Stomach (tissue), 19 donors: ENCODE measurements at regions of chr14 and their contacts with region 1.

Region 1: GRCh38 chr14:23320774-23321571 is at the start of gene PABPN1:
- DNase-seq: peak; percentile 100
- H3K4me3 ChIP-seq: peak within 1 kb of the TSS; percentile 90 to 96 (median 92)
- H3K27ac ChIP-seq: peak within 1 kb of the TSS; percentile 96 to 100 (median 98)
- H3K4me1 ChIP-seq: peaks cover 19 to 36% (median 29%) of the 10 kb centered on the region in 4 donors
- H3K27me3 ChIP-seq: no peaks in the 10 kb centered on the region
- CTCF ChIP-seq: no peak
- EP300 ChIP-seq: no peak
- POLR2A ChIP-seq: no peak
- total RNA-seq, gene PABPN1: 24.5 to 152 (median 70.5) TPM

Region 2: DNA sequence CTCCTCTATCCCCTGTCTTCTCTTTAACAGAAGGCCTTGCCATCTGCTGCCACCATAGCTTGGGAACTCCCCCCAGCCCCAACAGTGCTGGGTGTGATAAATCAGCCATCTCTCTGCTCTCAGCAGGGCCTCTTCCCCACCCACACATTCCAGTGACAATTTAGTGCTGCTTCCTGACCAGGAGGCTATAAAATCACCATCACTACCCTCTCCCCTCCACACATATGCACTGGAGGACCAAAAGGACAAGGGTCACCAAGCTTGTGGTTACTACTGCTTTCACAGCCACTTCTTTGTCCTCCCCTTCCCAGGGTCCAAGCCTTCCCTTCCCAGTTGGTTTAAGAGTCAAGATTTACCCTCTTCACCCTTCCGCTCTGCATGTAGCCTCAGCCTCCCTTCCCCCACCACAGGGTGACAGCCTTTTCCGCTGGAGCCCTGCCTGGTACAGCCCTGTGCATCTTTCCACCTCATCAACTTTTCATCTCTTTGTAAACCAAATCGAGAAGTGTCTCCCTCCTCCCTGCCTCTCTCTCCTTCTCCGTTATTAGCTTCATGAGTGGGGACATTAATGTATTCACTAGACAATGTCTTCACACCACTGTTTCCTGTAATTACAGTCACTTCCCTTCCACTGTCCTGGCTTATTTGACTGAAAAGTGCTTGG is 295.7 kb before region 1 on chr14:
- intact Hi-C with region 1: no loop called
- DNase-seq: no peak
- H3K4me3 ChIP-seq: no peak overlapping the region
- H3K27ac ChIP-seq: no peak overlapping the region
- H3K4me1 ChIP-seq: peaks cover 0 to 19% (median 8%) of the 10 kb centered on the region in 4 donors
- H3K27me3 ChIP-seq: no peaks in the 10 kb centered on the region
- CTCF ChIP-seq: no peak
- EP300 ChIP-seq: no peak
- POLR2A ChIP-seq: no peak

Region 3: GRCh38 chr14:23399591-23399990 is 78.6 kb after region 1 on chr14:
- intact Hi-C with region 1: no loop called
- DNase-seq: no peak
- H3K4me3 ChIP-seq: no peak overlapping the region
- H3K27ac ChIP-seq: no peak overlapping the region
- H3K4me1 ChIP-seq: no peaks in the 10 kb centered on the region
- H3K27me3 ChIP-seq: peaks cover 0 to 32% (median 7%) of the 10 kb centered on the region in 3 donors
- CTCF ChIP-seq: no peak
- EP300 ChIP-seq: no peak
- POLR2A ChIP-seq: no peak

Region 4: GRCh38 chr14:23469127-23469905 is 148.3 kb after region 1 on chr14 and contains the start of gene NGDN:
- intact Hi-C with region 1: loop called (anchors 10 kb)
- DNase-seq: peak; percentile 94 to 99
- H3K4me3 ChIP-seq: peak within 1 kb of the TSS; percentile 72 to 100 (median 90)
- H3K27ac ChIP-seq: peak within 1 kb of the TSS; percentile 59 to 91 (median 85)
- H3K4me1 ChIP-seq: peaks cover 11 to 20% (median 11%) of the 10 kb centered on the region in 4 donors
- H3K27me3 ChIP-seq: no peaks in the 10 kb centered on the region
- CTCF ChIP-seq: peak in 5 of 7 experiments; percentile 76 to 96 (median 80)
- EP300 ChIP-seq: no peak
- POLR2A ChIP-seq: no peak
- total RNA-seq, gene NGDN: 3.5 to 72.7 (median 20.3) TPM

Region 5: DNA sequence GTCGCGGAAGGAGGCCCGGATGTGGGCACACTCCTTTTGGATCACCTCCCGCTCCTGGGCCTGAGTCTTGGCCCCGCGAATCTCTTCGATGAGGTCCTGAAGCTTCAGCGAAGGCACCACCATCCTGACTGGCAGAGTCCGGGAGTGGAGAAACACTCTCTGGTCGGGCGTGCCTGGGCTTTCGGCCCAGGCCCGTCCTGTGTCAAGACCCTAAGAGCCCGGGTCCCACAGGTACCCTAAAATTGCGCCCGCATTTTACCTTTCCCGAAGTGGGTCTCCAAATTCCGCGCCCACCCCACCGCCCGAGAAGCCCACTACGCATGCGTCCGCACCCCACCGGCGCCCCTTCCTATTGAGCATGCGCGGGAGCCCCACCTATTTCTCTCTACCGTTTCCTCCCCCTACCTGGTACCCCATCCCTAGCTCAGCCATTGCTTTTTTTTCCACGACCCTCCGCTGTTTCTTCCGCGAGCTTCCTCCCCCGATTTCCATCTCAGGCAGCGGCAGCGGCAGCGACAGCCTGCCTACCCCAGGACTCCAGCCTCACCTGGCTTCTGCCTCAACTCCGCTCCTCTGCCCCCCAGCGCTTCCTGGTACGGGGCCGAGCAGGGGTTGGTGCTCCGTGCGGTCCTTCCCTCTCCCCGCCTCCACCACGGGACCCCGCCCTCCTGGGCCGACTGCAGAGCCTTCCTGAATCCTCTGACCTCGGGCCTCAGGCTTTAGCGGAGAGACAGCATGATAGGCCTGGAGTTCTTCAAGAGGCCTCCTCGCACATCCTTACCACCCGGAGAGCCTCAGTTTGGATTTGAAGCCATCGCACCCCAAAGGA is 246.4 kb after region 1 on chr14 and contains the start of gene AP1G2:
- intact Hi-C with region 1: loop called (anchors 10 kb)
- DNase-seq: peak; percentile 93 to 96
- H3K4me3 ChIP-seq: peak within 1 kb of the TSS; percentile 65 to 71 (median 68)
- H3K27ac ChIP-seq: peak within 1 kb of the TSS; percentile 79 to 90 (median 83)
- H3K4me1 ChIP-seq: peaks cover 18 to 48% (median 34%) of the 10 kb centered on the region in 4 donors
- H3K27me3 ChIP-seq: peaks cover 0 to 17% (median 0%) of the 10 kb centered on the region in 3 donors
- CTCF ChIP-seq: no peak
- EP300 ChIP-seq: no peak
- POLR2A ChIP-seq: peak in 1 of 4 donors; percentile 75
- total RNA-seq, gene AP1G2: 39.1 to 531 (median 212) TPM